ENCODE measurements at regions of chr4 and their contacts with region 1.

Region 1: DNA sequence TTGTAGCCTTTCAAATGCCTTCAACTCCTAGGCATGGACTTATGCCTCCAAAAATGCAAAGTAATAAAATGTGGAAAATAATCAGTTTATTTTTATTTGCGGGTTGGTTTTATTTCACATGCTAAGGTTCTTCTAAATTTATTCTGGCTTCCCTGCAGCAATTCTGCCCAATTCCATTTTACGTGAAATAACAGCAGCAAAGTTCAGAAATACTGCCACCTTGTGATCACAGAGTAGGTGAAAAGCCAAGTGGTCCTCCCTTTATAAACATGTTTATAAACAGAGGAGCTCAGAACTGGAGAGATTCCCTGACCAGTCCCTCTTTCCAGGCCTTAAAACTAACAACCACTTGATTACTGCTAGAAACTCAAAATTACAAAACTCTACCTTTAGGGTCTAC is 14.7 kb upstream of the DCHS2 start:
- DNase-seq: peak in 1 of 2 experiments; percentile 20
- H3K4me3 ChIP-seq: no peak overlapping the region
- H3K4me3 Mint-ChIP-seq: no peak overlapping the region
- H3K27ac Mint-ChIP-seq: no peak overlapping the region
- H3K4me1 ChIP-seq: 0 out of 2 replicates have a peak, but pooled peaks cover 7% of the 10 kb centered on the region
- H3K4me1 Mint-ChIP-seq: no peaks in the 10 kb centered on the region
- H3K27me3 ChIP-seq: no peaks in the 10 kb centered on the region
- H3K27me3 Mint-ChIP-seq: peaks cover 24% of the 10 kb centered on the region
- CTCF ChIP-seq: peak; percentile 35 to 44

Region 2: DNA sequence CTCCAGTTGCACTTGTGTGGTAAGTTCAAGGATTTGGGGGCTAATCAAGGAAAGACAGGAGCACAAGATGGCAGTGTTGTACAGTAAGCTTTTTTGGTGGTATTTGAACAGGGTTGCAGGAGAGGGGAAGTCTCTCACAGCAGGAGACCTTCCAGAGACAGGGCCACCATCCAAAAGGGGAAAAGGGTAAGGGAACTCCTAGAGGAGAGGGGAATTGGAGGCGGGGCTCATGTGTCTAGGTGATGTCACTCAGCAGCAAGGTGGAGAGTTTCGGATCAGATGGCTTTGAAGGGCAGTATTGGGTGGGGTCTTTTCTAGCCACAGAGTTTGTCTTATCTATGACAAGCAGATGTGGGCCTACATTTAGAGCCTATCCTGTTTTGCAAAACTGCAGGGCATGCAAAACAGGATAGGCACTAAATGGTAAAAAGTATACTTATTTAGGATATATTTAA is 733.0 kb before region 1 on chr4:
- CTCF ChIA-PET with region 1: no interaction called
- POLR2A ChIA-PET with region 1: no interaction called
- intact Hi-C with region 1: loop called (anchors 10 kb)
- DNase-seq: no peak
- H3K4me3 ChIP-seq: no peak overlapping the region
- H3K4me3 Mint-ChIP-seq: no peak overlapping the region
- H3K27ac Mint-ChIP-seq: no peak overlapping the region
- H3K4me1 ChIP-seq: no peaks in the 10 kb centered on the region
- H3K4me1 Mint-ChIP-seq: no peaks in the 10 kb centered on the region
- H3K27me3 ChIP-seq: no peaks in the 10 kb centered on the region
- H3K27me3 Mint-ChIP-seq: peaks cover 23% of the 10 kb centered on the region
- CTCF ChIP-seq: peak in 1 of 2 experiments; percentile 39

Region 3: GRCh38 chr4:154399259-154399974 is 106.8 kb before region 1 on chr4:
- CTCF ChIA-PET with region 1: interaction called, 10 read pairs
- POLR2A ChIA-PET with region 1: no interaction called
- intact Hi-C with region 1: loop called (anchors 1 kb)
- DNase-seq: peak in 1 of 2 experiments; percentile 31
- H3K4me3 ChIP-seq: no peak overlapping the region
- H3K4me3 Mint-ChIP-seq: peak overlapping the region; percentile 35
- H3K27ac Mint-ChIP-seq: no peak overlapping the region
- H3K4me1 ChIP-seq: no peaks in the 10 kb centered on the region
- H3K4me1 Mint-ChIP-seq: no peaks in the 10 kb centered on the region
- H3K27me3 ChIP-seq: no peaks in the 10 kb centered on the region
- H3K27me3 Mint-ChIP-seq: peaks cover 18% of the 10 kb centered on the region
- CTCF ChIP-seq: peak in 1 of 2 experiments; percentile 43

Region 4: DNA sequence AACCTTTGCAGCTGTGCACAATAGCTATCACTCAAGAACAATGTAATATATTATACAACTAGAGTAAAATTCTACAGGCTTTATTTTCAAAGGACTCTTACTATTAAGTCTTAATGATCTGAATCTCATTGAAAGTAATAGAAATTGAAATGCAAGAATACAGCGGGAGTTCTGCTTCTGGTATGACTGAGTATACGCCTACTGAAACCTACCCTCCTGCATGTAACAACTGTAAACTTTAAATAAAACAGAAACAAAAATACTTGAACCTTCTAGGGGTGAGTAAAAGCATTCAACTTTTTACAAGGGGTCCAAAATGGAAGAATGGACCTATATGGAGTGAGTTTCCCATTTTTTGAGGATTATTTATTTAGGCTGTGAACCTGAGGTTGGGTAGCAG is 28.1 kb before region 1 on chr4:
- CTCF ChIA-PET with region 1: no interaction called
- POLR2A ChIA-PET with region 1: no interaction called
- intact Hi-C with region 1: no loop called
- DNase-seq: no peak
- H3K4me3 ChIP-seq: no peak overlapping the region
- H3K4me3 Mint-ChIP-seq: no peak overlapping the region
- H3K27ac Mint-ChIP-seq: no peak overlapping the region
- H3K4me1 ChIP-seq: no peaks in the 10 kb centered on the region
- H3K4me1 Mint-ChIP-seq: no peaks in the 10 kb centered on the region
- H3K27me3 ChIP-seq: no peaks in the 10 kb centered on the region; the same call in 1 of the 2 replicates
- H3K27me3 Mint-ChIP-seq: peaks cover 4% of the 10 kb centered on the region
- CTCF ChIP-seq: no peak

Region 5: GRCh38 chr4:154491341-154492271 is 14.6 kb before region 1 on chr4 and contains the start of gene DCHS2:
- CTCF ChIA-PET with region 1: no interaction called
- POLR2A ChIA-PET with region 1: no interaction called
- intact Hi-C with region 1: loop called (anchors 2 kb)
- DNase-seq: peak; percentile 42 to 49
- H3K4me3 ChIP-seq: peak within 1 kb of the TSS; percentile 26
- H3K4me3 Mint-ChIP-seq: peak within 1 kb of the TSS; percentile 73
- H3K27ac Mint-ChIP-seq: no peak within 1 kb of the TSS
- H3K4me1 ChIP-seq: no peaks in the 10 kb centered on the region
- H3K4me1 Mint-ChIP-seq: no peaks in the 10 kb centered on the region
- H3K27me3 ChIP-seq: peaks cover 2% of the 10 kb centered on the region
- H3K27me3 Mint-ChIP-seq: peaks cover 20% of the 10 kb centered on the region
- CTCF ChIP-seq: no peak
- total RNA-seq, gene DCHS2: not detected in 2 replicates

Region 6: DNA sequence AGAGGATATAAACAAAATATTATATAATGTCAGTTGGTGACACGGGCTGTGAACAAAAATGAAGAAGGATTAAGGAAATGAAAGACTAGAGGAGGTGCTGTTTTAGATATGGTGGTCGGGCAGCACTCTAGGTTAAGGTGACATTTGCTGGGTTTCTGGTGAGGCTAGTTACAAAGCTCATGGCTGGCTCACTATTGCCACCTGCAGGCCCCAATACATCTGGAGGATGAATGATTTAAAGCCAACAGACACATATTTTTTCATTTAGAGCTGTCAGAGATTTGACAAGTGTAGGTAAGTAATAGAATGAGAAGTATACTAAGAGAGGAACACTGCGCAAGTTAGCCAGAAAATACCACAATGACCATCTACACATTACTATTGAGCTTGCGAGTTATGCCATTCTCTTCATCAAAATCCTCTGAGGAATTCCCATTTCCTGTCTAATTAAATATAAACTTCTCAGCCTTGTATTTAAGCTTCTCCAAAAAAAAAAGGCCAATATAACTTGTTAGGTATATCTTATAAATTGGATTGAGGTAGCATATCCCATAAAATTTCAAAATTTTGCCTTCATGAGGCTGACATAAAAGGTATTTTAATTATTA is 112.6 kb after region 1 on chr4:
- CTCF ChIA-PET with region 1: interaction called, 7 read pairs
- POLR2A ChIA-PET with region 1: no interaction called
- intact Hi-C with region 1: loop called (anchors 1 kb)
- DNase-seq: peak; percentile 78 to 79
- H3K4me3 ChIP-seq: no peak overlapping the region
- H3K4me3 Mint-ChIP-seq: no peak overlapping the region
- H3K27ac Mint-ChIP-seq: no peak overlapping the region
- H3K4me1 ChIP-seq: peaks cover 36% of the 10 kb centered on the region
- H3K4me1 Mint-ChIP-seq: peaks cover 17% of the 10 kb centered on the region
- H3K27me3 ChIP-seq: no peaks in the 10 kb centered on the region
- H3K27me3 Mint-ChIP-seq: no peaks in the 10 kb centered on the region
- CTCF ChIP-seq: peak; percentile 59 to 79

Measured in Caco-2 (cell line).